Breast epithelium (tissue), 4 donors: ENCODE measurements at regions of chr21 and their contacts with region 1.

Region 1: GRCh38 chr21:43866260-43866629 is 1.2 kb downstream of the AGPAT3 start:
- DNase-seq: peak in 1 of 2 donors; percentile 48
- H3K4me3 ChIP-seq: peak overlapping the region; percentile 75 to 93 (median 89)
- H3K27ac ChIP-seq: peak overlapping the region; percentile 82 to 93
- H3K4me1 ChIP-seq: peaks cover 4 to 7% of the 10 kb centered on the region in 2 donors
- H3K27me3 ChIP-seq: no peaks in the 10 kb centered on the region
- CTCF ChIP-seq: no peak
- POLR2A ChIP-seq: no peak

Region 2: DNA sequence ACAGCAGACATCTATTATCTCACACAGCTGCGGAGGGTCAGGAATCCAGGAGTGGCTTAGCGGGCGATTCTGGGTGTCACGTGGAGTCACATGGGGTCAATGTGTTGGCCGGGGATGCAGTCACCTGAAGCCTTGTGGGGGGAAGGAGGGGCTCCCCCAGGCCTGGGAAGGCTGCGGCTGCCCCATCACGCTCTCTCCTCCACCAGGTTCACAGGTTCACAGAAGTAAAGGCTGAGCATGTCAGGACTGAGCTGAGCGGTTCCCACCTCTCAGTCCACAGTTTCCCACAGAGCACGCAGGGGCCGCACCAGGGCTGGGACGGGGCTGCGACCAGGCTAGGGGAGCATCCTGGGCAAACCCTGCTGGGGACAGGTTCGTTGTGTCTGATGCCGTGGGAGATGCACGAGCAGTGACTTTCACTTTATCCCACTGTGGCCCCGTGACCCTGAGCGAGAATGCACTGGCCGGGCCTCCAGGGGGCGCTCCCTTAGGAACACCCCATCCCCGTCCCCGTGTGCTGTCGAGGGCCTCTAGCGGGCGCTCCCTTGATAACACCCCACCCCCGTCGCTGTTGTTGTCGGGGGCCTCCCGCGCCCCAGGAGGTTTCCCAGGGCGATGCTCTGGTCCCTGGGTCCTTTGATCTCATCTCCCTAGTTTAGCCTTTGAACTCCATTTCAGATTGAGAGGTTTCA is 72.7 kb after region 1 on chr21:
- intact Hi-C with region 1: loop called (anchors 5 kb)
- DNase-seq: peak; percentile 62 to 75
- H3K4me3 ChIP-seq: peak overlapping the region; percentile 38 to 56 (median 43)
- H3K27ac ChIP-seq: peak overlapping the region in 1 of 2 donors; percentile 10
- H3K4me1 ChIP-seq: peaks cover 0 to 8% of the 10 kb centered on the region in 2 donors
- H3K27me3 ChIP-seq: no peaks in the 10 kb centered on the region
- CTCF ChIP-seq: peak; percentile 67 to 90 (median 82)
- POLR2A ChIP-seq: no peak